Endothelial cell of umbilical vein (primary cell): ENCODE measurements at regions of chr2 and their contacts with region 1.

Region 1: DNA sequence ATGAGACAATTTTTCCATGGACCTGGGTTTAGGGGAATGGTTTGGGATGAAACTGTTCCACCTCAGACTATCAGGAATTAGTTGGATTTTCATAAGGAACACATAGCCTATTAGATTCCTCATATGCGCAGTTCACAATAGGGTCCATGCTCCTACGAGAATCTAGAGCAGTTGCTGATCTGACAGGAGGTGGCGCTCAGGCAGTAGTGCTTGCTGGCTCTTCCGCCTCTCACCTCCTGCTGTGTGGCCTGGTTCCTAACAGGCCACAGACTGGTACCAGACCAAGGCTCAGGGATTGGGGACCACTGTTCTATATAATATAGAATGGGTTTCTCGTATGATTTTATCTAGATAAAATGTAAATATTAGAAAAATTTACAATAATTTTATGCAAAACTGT is 338.7 kb downstream of the CPS1 start:
- DNase-seq: no peak
- H3K4me3 ChIP-seq: no peak overlapping the region
- H3K27ac ChIP-seq: no peak overlapping the region
- H3K4me1 ChIP-seq: no peaks in the 10 kb centered on the region
- H3K27me3 ChIP-seq: no peaks in the 10 kb centered on the region
- CTCF ChIP-seq: no peak
- POLR2A ChIP-seq: no peak

Region 2: GRCh38 chr2:211014376-211014775 is 119.2 kb after region 1 on chr2:
- CTCF ChIA-PET with region 1: no interaction called
- POLR2A ChIA-PET with region 1: no interaction called
- dilution Hi-C with region 1: no loop called
- intact Hi-C with region 1: loop called (anchors 5 kb)
- DNase-seq: peak; percentile 75
- H3K4me3 ChIP-seq: no peak overlapping the region
- H3K27ac ChIP-seq: no peak overlapping the region
- H3K4me1 ChIP-seq: no peaks in the 10 kb centered on the region
- H3K27me3 ChIP-seq: no peaks in the 10 kb centered on the region
- CTCF ChIP-seq: no peak
- POLR2A ChIP-seq: no peak